AG04450 (cell line): ENCODE measurements at regions of chr9 and their contacts with region 1.

Region 1: GRCh38 chr9:83962173-83962576 is 17.8 kb downstream of the HNRNPK start:
- DNase-seq: no peak
- H3K4me3 ChIP-seq: no peak overlapping the region
- H3K27ac ChIP-seq: no peak overlapping the region
- H3K27me3 ChIP-seq: no peaks in the 10 kb centered on the region
- CTCF ChIP-seq: no peak

Region 2: GRCh38 chr9:83765376-83765775 is 196.8 kb before region 1 on chr9:
- CTCF ChIA-PET with region 1: no interaction called
- POLR2A ChIA-PET with region 1: no interaction called
- DNase-seq: no peak
- H3K4me3 ChIP-seq: no peak overlapping the region
- H3K27ac ChIP-seq: no peak overlapping the region
- H3K27me3 ChIP-seq: no peaks in the 10 kb centered on the region
- CTCF ChIP-seq: no peak

Region 3: DNA sequence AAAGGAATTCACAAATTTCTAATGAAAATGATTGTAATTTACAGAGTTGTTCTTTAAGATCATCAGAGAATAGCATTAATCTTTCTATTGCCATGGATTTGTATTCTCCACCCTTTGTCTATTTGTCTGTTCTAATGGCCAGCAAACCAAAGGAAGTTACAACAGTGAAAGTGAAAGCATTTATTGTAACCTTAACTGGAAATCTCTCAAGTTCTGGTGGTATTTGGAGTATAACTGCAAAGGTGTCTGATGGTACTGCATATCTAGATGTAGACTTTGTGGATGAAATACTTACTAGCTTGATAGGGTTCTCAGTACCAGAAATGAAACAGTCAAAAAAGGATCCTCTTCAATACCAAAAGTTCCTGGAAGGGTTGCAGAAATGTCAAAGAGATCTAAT is 40.2 kb after region 1 on chr9:
- CTCF ChIA-PET with region 1: no interaction called
- POLR2A ChIA-PET with region 1: no interaction called
- DNase-seq: no peak
- H3K4me3 ChIP-seq: no peak overlapping the region
- H3K27ac ChIP-seq: no peak overlapping the region
- H3K27me3 ChIP-seq: no peaks in the 10 kb centered on the region
- CTCF ChIP-seq: no peak

Region 4: GRCh38 chr9:84163052-84163650 is 201.0 kb after region 1 on chr9:
- CTCF ChIA-PET with region 1: interaction called, 22 read pairs
- POLR2A ChIA-PET with region 1: no interaction called
- DNase-seq: no peak
- H3K4me3 ChIP-seq: no peak overlapping the region
- H3K27ac ChIP-seq: no peak overlapping the region
- H3K27me3 ChIP-seq: no peaks in the 10 kb centered on the region
- CTCF ChIP-seq: no peak